Common myeloid progenitor, CD34-positive (primary cell): ENCODE measurements at regions of chr3 and their contacts with region 1.

Region 1: DNA sequence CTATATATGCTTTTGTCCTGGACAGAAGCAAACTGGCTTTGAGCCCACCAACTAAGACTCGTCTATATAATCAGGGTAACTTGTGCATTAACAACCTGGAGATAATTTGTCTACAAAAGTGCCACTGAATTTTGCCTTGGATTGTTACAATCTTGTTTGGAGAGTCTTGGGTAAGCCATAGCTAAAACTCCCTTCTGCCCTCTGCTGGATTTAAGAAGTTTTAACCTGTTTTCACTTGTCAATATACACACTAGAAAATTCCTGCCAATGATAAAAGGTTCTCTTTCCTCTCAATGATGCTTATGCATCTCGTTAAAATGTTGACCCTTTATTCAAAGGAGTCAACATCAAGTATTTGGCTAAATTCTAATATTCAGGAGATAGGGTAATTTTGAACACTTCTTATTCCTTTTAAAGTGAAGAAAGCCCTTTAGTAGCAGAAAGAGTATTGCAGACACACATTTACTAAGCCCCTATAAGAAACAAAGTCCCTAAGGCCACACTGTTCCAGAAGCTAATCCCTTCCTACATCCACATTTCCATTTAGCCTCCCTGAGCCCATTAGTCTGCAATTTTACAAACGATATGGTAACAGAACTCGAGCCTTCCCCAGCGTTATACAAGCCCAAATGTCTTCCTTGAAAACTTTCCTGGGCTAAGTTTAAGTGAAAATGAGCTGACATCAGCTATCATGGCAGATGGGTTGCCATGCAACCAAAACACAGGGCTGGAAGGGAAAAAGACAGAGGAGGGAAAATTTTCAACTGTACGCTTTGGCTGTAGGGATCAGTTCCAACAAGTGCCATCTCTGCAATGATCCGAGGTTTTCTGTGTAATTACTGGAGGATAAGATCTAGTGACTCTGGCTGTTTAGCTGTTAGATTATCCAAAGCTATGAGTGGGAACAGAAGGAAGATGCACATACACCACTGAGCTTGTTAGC is 75.9 kb upstream of the FGF12 start:
- DNase-seq: peak; percentile 54 to 77 (median 70)
- H3K4me3 ChIP-seq: no peak overlapping the region
- H3K27ac ChIP-seq: no peak overlapping the region
- H3K4me1 ChIP-seq: no peaks in the 10 kb centered on the region
- H3K27me3 ChIP-seq: peaks cover 0 to 4% (median 0%) of the 10 kb centered on the region in 5 experiments

Region 2: DNA sequence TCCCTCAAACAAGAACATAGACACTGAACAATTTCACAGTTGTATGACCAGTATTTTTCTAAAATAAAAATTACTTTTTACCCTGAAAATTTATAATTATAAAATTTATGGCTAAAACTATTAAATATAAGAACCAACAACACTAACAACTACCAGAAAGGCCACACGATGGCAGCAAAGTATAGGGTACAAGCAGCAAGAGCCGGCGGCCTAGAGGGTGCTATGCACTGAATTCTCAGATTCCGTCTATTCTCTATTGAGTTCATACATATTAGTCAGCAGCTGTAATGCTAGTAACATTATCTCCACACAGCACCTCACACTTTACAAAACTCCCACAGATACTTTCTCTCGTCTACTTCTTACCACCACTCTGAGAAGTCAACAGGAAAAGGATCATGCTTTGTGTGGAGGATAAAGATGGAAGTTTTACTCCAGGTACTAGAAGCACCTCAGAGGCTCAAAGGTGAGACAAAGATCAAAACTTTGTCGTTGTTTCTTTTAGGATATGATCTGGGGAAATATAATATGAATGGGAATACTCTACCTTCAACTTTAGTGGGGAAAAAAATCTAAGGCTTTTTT is 236.4 kb before region 1 on chr3:
- CTCF ChIA-PET with region 1: interaction called, 75 read pairs
- POLR2A ChIA-PET with region 1: no interaction called
- DNase-seq: peak; percentile 75 to 89 (median 86)
- H3K4me3 ChIP-seq: no peak overlapping the region
- H3K27ac ChIP-seq: no peak overlapping the region
- H3K4me1 ChIP-seq: peaks cover 0 to 9% (median 4%) of the 10 kb centered on the region in 4 experiments
- H3K27me3 ChIP-seq: peaks cover 2 to 9% (median 7%) of the 10 kb centered on the region in 5 experiments

Region 3: DNA sequence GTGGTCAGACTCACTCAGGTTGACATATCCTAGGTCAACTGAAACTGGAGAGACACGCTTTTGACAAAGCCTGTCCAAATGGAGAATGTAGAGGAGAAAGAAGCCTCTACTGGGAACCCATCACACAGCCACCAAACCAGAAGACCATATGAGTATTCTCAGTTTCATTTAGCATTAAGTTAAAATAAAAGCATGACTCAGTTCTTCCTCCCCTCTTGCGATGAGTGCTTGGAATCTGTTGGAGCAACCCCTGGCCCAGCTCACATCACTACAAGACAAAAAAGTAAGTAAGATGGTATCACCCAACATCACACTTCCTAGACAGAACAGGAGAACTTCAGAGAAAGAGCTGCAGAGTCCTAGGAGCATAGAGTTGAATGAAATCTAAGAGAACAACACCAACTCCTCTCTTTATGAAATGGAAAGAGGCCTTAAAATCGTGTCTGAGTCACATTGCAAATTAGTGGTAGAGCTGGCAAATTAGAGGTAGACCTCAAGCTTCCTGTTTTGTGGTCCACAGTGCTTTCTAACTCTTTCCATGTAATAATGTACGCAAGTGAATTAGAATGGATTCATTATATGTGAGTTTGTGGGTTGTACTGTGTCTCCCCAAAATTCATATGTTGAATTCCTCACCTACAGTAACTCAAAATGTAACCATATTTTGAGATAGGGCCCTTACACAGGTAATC is 127.1 kb before region 1 on chr3:
- CTCF ChIA-PET with region 1: no interaction called
- POLR2A ChIA-PET with region 1: no interaction called
- DNase-seq: peak in 2 of 3 donors; percentile 21 to 31
- H3K4me3 ChIP-seq: no peak overlapping the region
- H3K27ac ChIP-seq: no peak overlapping the region
- H3K4me1 ChIP-seq: no peaks in the 10 kb centered on the region
- H3K27me3 ChIP-seq: no peaks in the 10 kb centered on the region